ENCODE measurements at regions of chr18 and their contacts with region 1.

Region 1: DNA sequence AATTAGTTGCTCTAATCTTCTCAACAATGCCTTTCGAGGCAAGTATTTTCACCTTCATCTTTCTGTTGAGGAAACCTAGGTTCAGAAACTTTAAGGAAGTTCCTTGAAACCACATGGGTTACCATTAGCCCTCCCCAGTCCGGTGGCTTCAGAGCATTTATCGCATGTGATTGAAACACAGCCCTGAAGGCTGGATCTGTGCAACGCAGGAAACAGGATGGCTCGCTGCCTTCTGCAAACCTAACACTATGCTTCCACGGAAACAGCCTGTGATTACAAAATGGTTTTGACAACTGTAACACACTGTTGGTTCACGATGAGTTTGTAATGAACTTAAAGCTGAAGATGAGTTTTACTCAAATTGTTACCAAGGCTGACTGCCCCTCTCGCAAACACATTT is 68.5 kb downstream of the EPB41L3 start:
- DNase-seq: no peak
- H3K4me3 ChIP-seq: no peak overlapping the region
- H3K27ac ChIP-seq: no peak overlapping the region
- H3K4me1 ChIP-seq: no peaks in the 10 kb centered on the region
- H3K27me3 ChIP-seq: no peaks in the 10 kb centered on the region
- CTCF ChIP-seq: no peak
- EP300 ChIP-seq: no peak
- POLR2A ChIP-seq: no peak

Region 2: DNA sequence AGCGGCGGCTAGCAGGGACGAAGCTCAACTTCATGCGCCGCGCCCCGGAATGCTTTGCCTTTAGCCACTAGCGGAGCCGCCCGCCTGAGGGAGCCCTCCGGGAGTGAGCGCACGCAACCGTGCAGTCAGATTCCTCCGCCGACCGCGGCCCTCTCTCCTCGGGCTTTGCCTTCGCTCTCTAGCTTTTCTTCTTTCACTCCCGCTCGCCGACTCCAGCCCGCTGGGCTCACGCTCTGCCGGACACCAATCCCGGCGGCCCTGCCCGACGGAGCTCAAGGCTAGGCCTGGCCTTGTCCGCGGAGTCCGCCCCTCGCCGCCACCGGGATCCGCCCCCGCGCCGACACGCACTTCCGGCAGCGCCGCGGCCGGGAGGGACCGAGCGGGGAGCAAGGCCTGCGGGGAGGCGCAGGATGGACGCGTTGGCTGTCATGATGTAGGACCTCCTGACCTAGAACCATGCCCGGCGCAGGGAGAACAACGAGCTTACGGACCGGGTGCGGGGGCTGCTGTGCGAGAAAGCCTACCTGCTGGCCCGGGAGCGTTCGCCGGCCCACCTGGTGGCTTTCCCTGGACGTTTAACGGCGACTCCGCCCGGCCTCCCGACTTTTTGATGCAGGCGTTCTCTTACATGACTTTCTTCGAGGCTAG is 237.4 kb before region 1 on chr18:
- intact Hi-C with region 1: no loop called
- DNase-seq: peak; percentile 84 to 92 (median 87)
- H3K4me3 ChIP-seq: peak overlapping the region; percentile 60
- H3K27ac ChIP-seq: peak overlapping the region; percentile 98
- H3K4me1 ChIP-seq: no peaks in the 10 kb centered on the region
- H3K27me3 ChIP-seq: no peaks in the 10 kb centered on the region
- CTCF ChIP-seq: peak in 2 of 3 donors; percentile 49 to 73
- EP300 ChIP-seq: no peak
- POLR2A ChIP-seq: peak; percentile 74

Region 3: DNA sequence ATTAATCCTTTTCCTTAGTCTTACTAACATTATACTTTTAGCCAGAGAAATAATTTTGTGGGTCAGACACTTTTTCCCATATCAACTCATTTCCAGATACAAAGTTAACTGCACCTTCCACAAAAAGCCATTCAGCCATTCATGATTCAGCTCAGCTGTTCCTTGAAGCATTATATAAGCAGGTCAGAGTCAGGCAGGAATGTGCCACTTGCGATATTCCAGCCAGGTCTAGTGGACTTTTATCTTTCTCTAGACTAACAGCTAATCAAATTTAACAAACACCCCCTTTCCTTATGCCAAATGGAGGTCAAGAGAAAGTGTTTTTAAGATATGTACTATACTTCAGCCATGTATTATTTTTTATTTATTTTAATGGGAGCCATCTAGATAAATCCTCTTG is 144.1 kb after region 1 on chr18:
- intact Hi-C with region 1: loop called in 1 of 4 experiments (anchors 10 kb)
- DNase-seq: no peak
- H3K4me3 ChIP-seq: no peak overlapping the region
- H3K27ac ChIP-seq: no peak overlapping the region
- H3K4me1 ChIP-seq: no peaks in the 10 kb centered on the region
- H3K27me3 ChIP-seq: no peaks in the 10 kb centered on the region
- CTCF ChIP-seq: no peak
- EP300 ChIP-seq: no peak
- POLR2A ChIP-seq: no peak

Region 4: DNA sequence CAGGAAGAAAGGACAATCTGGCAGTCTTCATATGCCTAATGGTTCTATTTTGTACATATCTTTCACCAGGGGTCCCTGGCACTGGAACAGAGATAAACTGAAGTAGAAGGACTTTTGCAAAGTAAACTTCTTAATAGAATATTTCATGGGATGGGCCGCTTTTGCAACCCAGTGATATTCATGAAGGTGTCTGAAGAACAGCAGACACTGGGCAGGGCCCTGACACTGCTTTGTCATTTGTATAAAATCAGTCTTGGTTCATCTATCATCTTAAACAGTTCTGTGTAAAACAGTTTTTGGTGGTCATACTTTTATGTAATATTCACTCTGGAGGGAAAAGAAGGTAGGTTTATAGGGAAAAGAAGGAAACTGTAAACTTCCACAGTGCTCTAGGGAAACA is 353.6 kb after region 1 on chr18:
- intact Hi-C with region 1: no loop called
- DNase-seq: no peak
- H3K4me3 ChIP-seq: no peak overlapping the region
- H3K27ac ChIP-seq: no peak overlapping the region
- H3K4me1 ChIP-seq: no peaks in the 10 kb centered on the region
- H3K27me3 ChIP-seq: no peaks in the 10 kb centered on the region
- CTCF ChIP-seq: no peak
- EP300 ChIP-seq: no peak
- POLR2A ChIP-seq: no peak